ENCODE measurements at regions of chr22 and their contacts with region 1.

Region 1: GRCh38 chr22:44567846-44568493 is 69.9 kb upstream of the RTL6 start:
- DNase-seq: peak; percentile 66
- H3K4me3 ChIP-seq: no peak overlapping the region
- H3K27ac ChIP-seq: no peak overlapping the region
- H3K4me1 ChIP-seq: no peaks in the 10 kb centered on the region
- CTCF ChIP-seq: peak; percentile 75

Region 2: DNA sequence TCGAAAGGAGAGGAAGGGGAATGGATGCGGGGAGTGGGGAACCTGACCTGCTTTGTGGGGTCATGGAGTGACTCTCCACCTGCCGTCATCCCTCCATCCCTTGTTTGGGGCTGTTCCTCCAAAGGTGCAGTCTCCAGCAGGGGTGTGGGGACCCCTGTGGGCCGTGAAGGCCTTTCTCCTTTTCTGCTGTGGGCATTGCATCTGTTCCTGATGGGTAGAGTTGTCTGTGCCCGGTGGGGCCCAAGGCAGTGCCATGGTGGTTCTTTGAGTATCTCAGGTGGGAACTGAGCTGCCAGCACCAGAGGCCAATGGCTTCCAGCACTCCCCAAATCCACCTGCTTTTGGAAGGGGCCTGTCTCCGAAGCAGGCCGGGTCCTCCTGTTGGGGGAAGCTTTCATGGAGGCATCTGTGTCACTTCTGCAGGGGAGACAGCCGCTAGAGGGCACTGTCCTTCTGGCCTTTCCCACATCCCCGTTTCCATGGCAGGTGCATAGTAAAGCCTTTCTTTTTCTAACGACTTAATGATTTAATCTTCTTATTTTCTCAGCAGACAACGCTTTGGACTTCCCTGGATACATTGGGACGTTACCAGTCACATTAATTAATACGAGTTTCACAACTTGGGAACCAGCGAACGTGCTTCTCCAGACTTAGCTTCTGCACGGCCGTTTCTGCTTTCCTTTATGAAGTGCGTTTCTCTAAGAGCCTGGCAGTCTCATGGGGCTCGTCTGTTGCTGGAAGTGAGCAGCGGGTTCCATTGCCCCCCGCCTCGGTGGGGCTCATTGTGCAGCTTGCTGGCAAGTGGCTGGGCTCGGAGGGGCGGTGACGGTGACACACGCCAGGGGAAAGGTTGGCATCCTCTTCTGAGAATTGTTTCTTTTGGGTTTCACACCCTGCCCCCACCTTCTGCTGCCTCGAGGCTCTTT is 486.8 kb before region 1 on chr22:
- CTCF ChIA-PET with region 1: no interaction called
- POLR2A ChIA-PET with region 1: no interaction called
- intact Hi-C with region 1: loop called (anchors 10 kb)
- DNase-seq: peak; percentile 72
- H3K4me3 ChIP-seq: no peak overlapping the region
- H3K27ac ChIP-seq: no peak overlapping the region
- H3K4me1 ChIP-seq: no peaks in the 10 kb centered on the region
- CTCF ChIP-seq: peak; percentile 89

Region 3: GRCh38 chr22:44337678-44338004 is 230.3 kb before region 1 on chr22:
- CTCF ChIA-PET with region 1: no interaction called
- POLR2A ChIA-PET with region 1: no interaction called
- intact Hi-C with region 1: loop called (anchors 2 kb)
- DNase-seq: no peak
- H3K4me3 ChIP-seq: no peak overlapping the region
- H3K27ac ChIP-seq: no peak overlapping the region
- H3K4me1 ChIP-seq: no peaks in the 10 kb centered on the region
- CTCF ChIP-seq: no peak

Region 4: GRCh38 chr22:44455151-44455962 is 112.6 kb before region 1 on chr22:
- CTCF ChIA-PET with region 1: no interaction called
- POLR2A ChIA-PET with region 1: no interaction called
- intact Hi-C with region 1: loop called (anchors 10 kb)
- DNase-seq: peak; percentile 92
- H3K4me3 ChIP-seq: peak overlapping the region; percentile 48
- H3K27ac ChIP-seq: peak overlapping the region; percentile 95
- H3K4me1 ChIP-seq: peaks cover 72% of the 10 kb centered on the region
- CTCF ChIP-seq: 0 out of 2 replicates have a peak, but pooled peaks have one; percentile 23

Measured in OCI-LY7 (cell line).